Endothelial cell of umbilical vein (primary cell): ENCODE measurements at regions of chr17 and their contacts with region 1.

Region 1: GRCh38 chr17:18314731-18315561 is at the starts of genes SMCR8 and TOP3A:
- DNase-seq: peak; percentile 99
- H3K4me3 ChIP-seq: peak within 1 kb of the TSS; percentile 58 to 80 (median 72)
- H3K27ac ChIP-seq: peak within 1 kb of the TSS; percentile 83
- H3K4me1 ChIP-seq: peaks cover 26% of the 10 kb centered on the region
- H3K27me3 ChIP-seq: no peaks in the 10 kb centered on the region
- CTCF ChIP-seq: no peak
- POLR2A ChIP-seq: peak; percentile 72
- total RNA-seq, gene SMCR8: 16.1 and 17.6 TPM in 2 replicates
- total RNA-seq, gene TOP3A: 46.9 and 53.1 TPM in 2 replicates

Region 2: GRCh38 chr17:17922070-17922614 is 392.8 kb before region 1 on chr17:
- CTCF ChIA-PET with region 1: no interaction called
- POLR2A ChIA-PET with region 1: no interaction called
- dilution Hi-C with region 1: no loop called
- intact Hi-C with region 1: no loop called
- DNase-seq: no peak
- H3K4me3 ChIP-seq: no peak overlapping the region
- H3K27ac ChIP-seq: peak overlapping the region; percentile 58
- H3K4me1 ChIP-seq: peaks cover 27% of the 10 kb centered on the region
- H3K27me3 ChIP-seq: no peaks in the 10 kb centered on the region
- CTCF ChIP-seq: no peak
- POLR2A ChIP-seq: no peak

Region 3: DNA sequence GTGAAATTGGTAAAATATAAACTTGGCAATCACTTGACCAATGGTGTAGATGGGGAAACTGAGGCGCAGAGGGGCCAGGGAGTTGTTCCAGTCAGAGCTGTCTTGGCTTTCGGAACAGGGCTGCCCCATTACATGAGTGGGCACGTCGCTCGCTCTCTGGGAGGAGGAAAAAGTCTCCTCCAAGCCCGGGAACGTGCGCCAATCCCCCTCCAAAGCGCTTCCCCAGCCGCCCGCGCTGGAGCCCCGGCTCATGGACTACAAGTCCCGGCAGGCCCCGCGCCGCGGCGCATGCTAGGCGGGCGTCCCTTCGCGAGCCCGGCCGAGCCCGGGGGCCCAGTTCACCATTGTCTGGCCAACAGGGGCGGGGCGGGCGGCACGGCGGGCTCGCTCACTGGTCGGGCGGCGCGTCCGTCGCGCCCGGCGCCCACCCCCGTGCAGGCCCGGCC is 89.8 kb before region 1 on chr17:
- CTCF ChIA-PET with region 1: no interaction called
- POLR2A ChIA-PET with region 1: no interaction called
- dilution Hi-C with region 1: no loop called
- intact Hi-C with region 1: loop called (anchors 2 kb)
- DNase-seq: peak; percentile 91
- H3K4me3 ChIP-seq: peak overlapping the region in 1 of 3 experiments; percentile 30
- H3K27ac ChIP-seq: no peak overlapping the region
- H3K4me1 ChIP-seq: peaks cover 18% of the 10 kb centered on the region
- H3K27me3 ChIP-seq: no peaks in the 10 kb centered on the region
- CTCF ChIP-seq: no peak
- POLR2A ChIP-seq: no peak

Region 4: DNA sequence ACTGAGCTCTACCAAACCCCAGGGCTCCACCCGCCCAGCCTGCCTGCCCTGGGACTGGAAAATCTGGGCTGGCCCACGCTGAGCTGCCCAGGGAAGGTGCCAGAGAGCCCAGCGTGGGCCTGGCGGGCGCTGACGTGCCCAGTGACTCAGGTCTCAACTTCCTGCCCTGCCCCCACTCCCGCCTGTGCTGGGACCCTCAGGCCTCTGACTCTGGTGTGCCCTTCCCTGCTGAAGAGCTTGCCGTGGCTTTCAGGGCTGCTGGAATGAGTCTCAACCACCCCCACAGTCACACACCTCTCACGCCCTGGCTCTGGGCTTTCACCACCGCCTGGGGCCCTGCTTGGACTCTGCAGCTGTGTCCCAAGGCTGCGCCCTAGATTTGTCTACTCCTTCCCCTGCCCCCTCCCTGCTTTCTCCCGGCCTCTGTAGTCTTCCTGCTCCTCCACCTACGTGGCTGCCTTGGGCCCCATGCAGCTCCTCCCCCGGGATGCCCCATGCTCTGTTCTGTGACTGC is 79.1 kb before region 1 on chr17:
- CTCF ChIA-PET with region 1: no interaction called
- POLR2A ChIA-PET with region 1: no interaction called
- dilution Hi-C with region 1: no loop called
- intact Hi-C with region 1: loop called (anchors 2 kb)
- DNase-seq: peak; percentile 72
- H3K4me3 ChIP-seq: no peak overlapping the region
- H3K27ac ChIP-seq: peak overlapping the region; percentile 89
- H3K4me1 ChIP-seq: peaks cover 13% of the 10 kb centered on the region
- H3K27me3 ChIP-seq: no peaks in the 10 kb centered on the region
- CTCF ChIP-seq: no peak
- POLR2A ChIP-seq: no peak

Region 5: DNA sequence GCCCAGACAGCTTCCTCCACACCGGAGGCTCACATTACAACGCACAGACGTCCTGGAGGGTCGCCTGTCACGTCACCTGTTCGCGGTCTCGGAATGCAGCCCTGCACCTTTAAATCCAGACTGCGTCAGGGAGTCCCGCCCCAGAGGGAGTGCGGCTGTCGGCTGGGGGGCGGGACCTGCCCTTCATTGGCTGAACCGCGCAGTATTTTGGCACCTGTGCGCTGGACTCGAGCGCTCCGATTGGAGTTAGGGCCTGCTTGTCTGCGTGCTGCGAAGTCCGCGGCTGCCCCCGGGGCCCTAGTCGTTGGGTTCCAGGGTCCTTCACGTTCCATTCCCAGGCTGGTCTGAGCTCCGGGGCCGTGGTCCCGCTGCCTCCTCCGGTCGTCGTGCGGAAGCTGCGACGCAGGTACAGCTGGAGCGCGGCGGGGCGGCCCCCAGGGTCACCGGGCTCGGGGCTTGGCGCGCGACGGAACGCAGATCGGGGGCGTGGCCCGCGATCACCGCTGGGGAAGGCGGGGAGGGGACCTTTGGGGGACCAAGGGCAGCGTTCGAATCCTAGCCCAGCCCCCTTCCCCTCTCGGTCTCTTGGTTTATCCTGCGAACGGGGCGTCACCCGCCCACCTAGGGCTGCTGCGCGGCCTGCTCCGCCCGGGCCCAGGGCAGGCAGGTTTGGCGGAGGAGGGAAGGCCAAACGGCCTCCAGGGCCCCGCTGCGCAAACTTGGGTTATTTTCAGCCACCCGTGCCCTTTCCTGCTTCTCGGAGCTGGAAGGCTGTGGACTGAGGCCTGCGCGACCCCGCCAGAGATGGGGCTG is 54.4 kb before region 1 on chr17 and contains the start of gene MIEF2:
- CTCF ChIA-PET with region 1: no interaction called
- POLR2A ChIA-PET with region 1: no interaction called
- dilution Hi-C with region 1: no loop called
- intact Hi-C with region 1: loop called (anchors 1 kb)
- DNase-seq: peak; percentile 96
- H3K4me3 ChIP-seq: peak within 1 kb of the TSS; percentile 45 to 78 (median 65)
- H3K27ac ChIP-seq: peak within 1 kb of the TSS; percentile 23
- H3K4me1 ChIP-seq: peaks cover 14% of the 10 kb centered on the region
- H3K27me3 ChIP-seq: no peaks in the 10 kb centered on the region
- CTCF ChIP-seq: no peak
- POLR2A ChIP-seq: peak; percentile 52
- total RNA-seq, gene MIEF2: 8.3 and 8.5 TPM in 2 replicates

Region 6: DNA sequence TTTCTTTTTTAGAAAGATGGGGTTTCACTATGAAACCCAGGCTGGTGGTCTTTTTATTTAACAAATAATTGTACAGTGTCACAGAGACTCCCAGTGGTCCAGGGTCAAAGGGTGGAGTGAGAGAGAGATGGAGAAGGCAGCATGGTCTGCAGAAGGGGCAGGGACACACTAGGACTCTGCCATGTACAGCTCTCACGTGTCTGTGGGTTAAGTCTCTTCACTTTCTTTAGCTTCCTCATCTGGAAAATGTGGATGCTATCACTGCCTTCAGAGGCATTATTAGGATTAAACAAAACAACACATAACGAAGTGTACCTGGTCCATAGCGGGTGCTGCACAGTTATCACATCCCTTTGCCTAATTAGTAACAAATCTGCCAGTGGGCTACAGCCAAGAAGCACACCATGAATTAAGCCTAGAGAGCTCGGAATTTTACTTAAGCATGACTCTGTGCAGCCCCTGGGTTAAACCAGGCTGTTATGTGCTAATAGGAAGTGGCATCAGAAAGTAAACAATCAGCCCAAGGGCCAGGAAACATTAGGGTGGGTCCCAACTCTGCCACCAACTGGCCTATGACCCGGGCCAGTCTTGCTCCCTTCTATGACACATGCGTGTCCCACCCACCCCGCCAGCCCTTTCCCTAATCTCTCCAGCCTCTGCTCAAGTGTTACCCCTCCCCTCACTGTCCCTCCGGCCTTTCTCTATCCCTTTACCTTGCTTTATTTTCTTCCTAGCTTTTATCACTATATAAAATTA is 14.0 kb before region 1 on chr17:
- CTCF ChIA-PET with region 1: interaction called, 3 read pairs
- POLR2A ChIA-PET with region 1: no interaction called
- dilution Hi-C with region 1: no loop called
- intact Hi-C with region 1: loop called (anchors 1 kb)
- DNase-seq: peak; percentile 64
- H3K4me3 ChIP-seq: no peak overlapping the region
- H3K27ac ChIP-seq: peak overlapping the region; percentile 19
- H3K4me1 ChIP-seq: peaks cover 15% of the 10 kb centered on the region
- H3K27me3 ChIP-seq: no peaks in the 10 kb centered on the region
- CTCF ChIP-seq: no peak
- POLR2A ChIP-seq: peak; percentile 34

Region 7: GRCh38 chr17:18363101-18364049 is 48.4 kb after region 1 on chr17 and contains the start of gene SHMT1:
- CTCF ChIA-PET with region 1: no interaction called
- POLR2A ChIA-PET with region 1: no interaction called
- dilution Hi-C with region 1: no loop called
- intact Hi-C with region 1: loop called (anchors 1 kb)
- DNase-seq: peak; percentile 90
- H3K4me3 ChIP-seq: peak within 1 kb of the TSS; percentile 57 to 62 (median 59)
- H3K27ac ChIP-seq: no peak within 1 kb of the TSS
- H3K4me1 ChIP-seq: peaks cover 6% of the 10 kb centered on the region
- H3K27me3 ChIP-seq: no peaks in the 10 kb centered on the region
- CTCF ChIP-seq: no peak
- POLR2A ChIP-seq: peak; percentile 70
- total RNA-seq, gene SHMT1: 27.2 and 27.6 TPM in 2 replicates